Left lung (tissue), 14 donors: ENCODE measurements at regions of chr12 and their contacts with region 1.

Region 1: GRCh38 chr12:93778306-93778705 is 101.1 kb downstream of the CRADD start:
- DNase-seq: peak in 2 of 4 donors; percentile 43 to 59
- ATAC-seq: peak; percentile 68
- H3K4me3 ChIP-seq: no peak overlapping the region
- H3K27ac ChIP-seq: peak overlapping the region; percentile 52 to 81
- H3K4me1 ChIP-seq: peaks cover 9 to 42% of the 10 kb centered on the region in 2 donors
- H3K27me3 ChIP-seq: no peaks in the 10 kb centered on the region
- CTCF ChIP-seq: no peak

Region 2: DNA sequence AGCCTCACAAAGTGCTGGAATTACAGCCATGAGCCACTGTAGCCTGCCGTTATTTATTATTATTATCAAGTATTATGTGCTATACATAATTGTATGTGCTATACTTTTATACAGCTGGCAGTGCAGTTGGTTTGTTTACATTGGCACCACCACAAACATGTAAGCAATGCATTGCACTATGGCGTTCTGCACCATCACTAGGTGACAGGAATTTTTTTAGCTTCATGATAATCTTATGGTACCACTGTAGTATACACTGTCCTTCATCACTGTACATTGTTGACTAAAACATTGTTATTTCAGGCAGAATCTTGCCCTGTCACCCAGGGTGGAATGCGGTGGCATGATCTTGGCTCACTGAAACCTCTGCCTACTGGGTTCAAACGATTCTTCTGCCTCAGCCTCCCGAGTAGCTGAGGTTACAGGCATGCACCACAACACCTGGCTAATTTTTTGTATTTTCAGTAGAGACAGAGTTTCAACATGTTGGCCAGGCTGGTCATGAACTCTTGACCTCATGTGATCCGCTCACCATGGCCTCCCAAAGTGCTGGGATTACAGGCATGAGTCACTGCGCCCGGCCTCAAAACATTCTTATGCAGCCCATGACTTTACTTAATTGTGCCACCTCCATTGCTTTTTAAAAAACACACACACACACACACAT is 293.9 kb before region 1 on chr12:
- intact Hi-C with region 1: no loop called
- DNase-seq: no peak
- ATAC-seq: no peak
- H3K4me3 ChIP-seq: no peak overlapping the region
- H3K27ac ChIP-seq: no peak overlapping the region
- H3K4me1 ChIP-seq: no peaks in the 10 kb centered on the region
- H3K27me3 ChIP-seq: no peaks in the 10 kb centered on the region
- CTCF ChIP-seq: no peak

Region 3: DNA sequence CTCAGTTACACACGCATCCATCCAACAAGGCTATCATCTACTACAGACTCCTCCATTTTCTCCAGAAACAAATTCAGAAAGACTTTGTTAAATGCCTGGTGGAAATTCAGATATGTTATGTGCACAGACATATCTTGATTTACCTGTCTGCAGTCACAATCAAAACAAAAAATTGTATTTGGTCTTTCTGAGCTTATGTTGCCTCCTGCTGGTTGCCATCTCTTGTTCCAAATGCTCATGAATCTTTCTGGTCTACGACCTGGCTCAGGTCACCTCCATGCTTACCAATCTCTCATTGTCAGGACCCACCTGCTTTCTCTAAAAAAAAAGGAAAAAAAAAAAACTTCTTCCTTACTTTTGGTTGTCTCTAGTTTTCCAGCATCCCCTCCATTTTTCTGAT is 200.9 kb after region 1 on chr12:
- intact Hi-C with region 1: loop called in 1 of 2 experiments (anchors 10 kb)
- DNase-seq: peak in 1 of 4 donors; percentile 26
- ATAC-seq: peak; percentile 62
- H3K4me3 ChIP-seq: no peak overlapping the region
- H3K27ac ChIP-seq: no peak overlapping the region
- H3K4me1 ChIP-seq: no peaks in the 10 kb centered on the region
- H3K27me3 ChIP-seq: no peaks in the 10 kb centered on the region
- CTCF ChIP-seq: peak; percentile 16 to 32